Naive thymus-derived CD8-positive, alpha-beta T cell (primary cell): ENCODE measurements at regions of chr5 and their contacts with region 1.

Region 1: GRCh38 chr5:141923448-141924352 is at the start of gene DELE1:
- DNase-seq: peak; percentile 75 to 93 (median 88)
- ATAC-seq: peak; percentile 95 to 97
- H3K4me3 Mint-ChIP-seq: peak within 1 kb of the TSS; percentile 88 to 96 (median 94)
- H3K27ac Mint-ChIP-seq: peak within 1 kb of the TSS; percentile 93 to 98 (median 98)
- H3K4me1 Mint-ChIP-seq: peaks cover 20 to 37% (median 29%) of the 10 kb centered on the region in 4 donors
- H3K27me3 Mint-ChIP-seq: no peaks in the 10 kb centered on the region
- polyA plus RNA-seq, gene DELE1: 28.2 to 33.5 (median 31.4) TPM

Region 2: DNA sequence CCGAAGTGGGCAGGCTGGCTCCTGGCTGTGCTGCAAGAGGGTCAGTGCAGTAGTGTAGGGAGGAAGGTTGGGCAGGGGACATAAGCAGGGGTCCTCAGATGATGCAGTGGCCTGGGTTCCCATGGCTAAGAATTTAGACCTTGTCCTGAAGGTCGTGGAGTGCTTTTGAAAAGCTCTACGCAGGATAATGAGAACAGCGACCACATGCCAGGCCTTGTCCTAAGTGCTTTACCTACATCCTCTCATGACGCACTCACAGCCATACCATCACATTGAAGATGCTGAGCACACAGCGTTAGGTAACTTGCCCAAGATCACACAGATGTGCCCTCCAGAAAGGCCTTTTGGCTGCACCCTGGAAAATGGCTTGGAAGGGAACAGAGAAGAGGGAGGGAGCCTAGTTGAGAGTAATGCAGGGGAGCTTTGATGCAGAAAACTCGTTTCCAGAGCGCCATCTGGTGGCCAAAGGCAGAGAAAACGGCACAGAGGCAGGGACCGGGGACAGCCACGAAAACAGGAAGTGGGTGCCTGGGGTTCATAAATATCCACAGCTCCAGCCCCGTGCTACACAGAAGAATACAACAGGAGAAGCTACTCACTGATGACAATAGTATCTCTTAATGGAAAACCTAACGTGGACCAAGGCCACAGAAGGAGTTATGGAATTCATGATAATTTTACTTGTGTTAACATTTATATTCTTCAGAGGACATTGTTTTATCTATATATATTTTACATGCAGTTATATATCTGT is 36.9 kb after region 1 on chr5:
- POLR2A ChIA-PET with region 1: interaction called, 30 read pairs
- DNase-seq: peak; percentile 77 to 94 (median 89)
- ATAC-seq: peak; percentile 97 to 98
- H3K4me3 Mint-ChIP-seq: peak overlapping the region; percentile 39 to 72 (median 66)
- H3K27ac Mint-ChIP-seq: peak overlapping the region; percentile 70 to 96 (median 88)
- H3K4me1 Mint-ChIP-seq: peaks cover 25 to 53% (median 43%) of the 10 kb centered on the region in 4 donors
- H3K27me3 Mint-ChIP-seq: no peaks in the 10 kb centered on the region